ENCODE measurements at regions of chr3 and their contacts with region 1.

Region 1: GRCh38 chr3:48556793-48557626 is at the start of gene PFKFB4:
- DNase-seq: peak; percentile 90 to 97 (median 96)
- ATAC-seq: peak; percentile 88
- H3K4me3 ChIP-seq: peak within 1 kb of the TSS; percentile 61
- H3K27ac ChIP-seq: peak within 1 kb of the TSS; percentile 74
- H3K4me1 ChIP-seq: peaks cover 49 to 66% of the 10 kb centered on the region in 2 experiments
- H3K27me3 ChIP-seq: no peaks in the 10 kb centered on the region
- CTCF ChIP-seq: no peak; a peak in 1 of 6 replicates
- EP300 ChIP-seq: no peak
- POLR2A ChIP-seq: peak; percentile 69
- RAD21 ChIP-seq: no peak
- polyA plus RNA-seq, gene PFKFB4: 0.92 to 1.6 TPM

Region 2: DNA sequence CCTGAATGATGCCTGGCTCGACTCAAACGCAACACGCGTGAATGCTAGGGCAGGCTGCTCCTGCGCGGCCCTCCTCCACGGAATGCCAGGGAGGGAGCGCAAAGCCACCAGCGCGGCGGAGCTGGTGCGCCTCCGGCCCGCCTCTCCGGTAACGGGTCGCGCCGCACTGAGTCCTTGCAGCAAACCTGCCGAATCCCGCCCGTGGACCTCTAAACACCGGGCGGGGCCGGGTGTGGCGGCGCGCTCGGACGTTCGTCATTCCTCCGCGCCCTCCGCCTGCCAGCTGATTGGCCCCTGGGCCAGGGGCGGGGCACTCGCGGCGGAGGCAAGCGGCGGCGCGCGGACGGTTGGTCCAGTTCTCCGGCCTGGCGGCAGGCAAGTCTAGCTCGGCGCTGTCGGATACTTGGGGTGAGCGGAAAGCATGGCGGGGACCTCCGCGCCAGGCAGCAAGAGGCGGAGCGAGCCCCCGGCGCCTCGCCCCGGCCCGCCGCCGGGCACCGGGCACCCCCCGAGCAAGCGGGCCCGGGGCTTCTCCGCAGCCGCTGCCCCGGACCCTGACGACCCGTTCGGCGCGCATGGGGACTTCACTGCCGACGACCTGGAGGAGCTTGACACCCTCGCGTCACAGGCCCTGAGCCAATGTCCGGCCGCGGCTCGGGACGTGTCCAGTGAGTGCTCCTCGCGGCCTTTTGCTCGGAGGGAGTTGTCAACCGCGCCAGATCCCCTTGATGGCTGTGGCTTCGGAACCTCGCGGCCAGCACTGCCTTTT is 110.4 kb before region 1 on chr3 and contains the start of gene ATRIP:
- CTCF ChIA-PET with region 1: interaction called, 8 read pairs
- POLR2A ChIA-PET with region 1: interaction called, 3 read pairs
- in situ Hi-C with region 1: no loop called
- intact Hi-C with region 1: loop called (anchors 1 kb)
- DNase-seq: peak; percentile 86 to 93 (median 90)
- ATAC-seq: peak; percentile 94
- H3K4me3 ChIP-seq: peak within 1 kb of the TSS; percentile 88
- H3K27ac ChIP-seq: peak within 1 kb of the TSS; percentile 88
- H3K4me1 ChIP-seq: peaks cover 4 to 18% of the 10 kb centered on the region in 2 experiments; a peak in 4 of 5 replicates
- H3K27me3 ChIP-seq: no peaks in the 10 kb centered on the region
- CTCF ChIP-seq: 0 out of 6 replicates have a peak, but pooled peaks of 1 of the 3 experiments have one; percentile 2
- EP300 ChIP-seq: no peak
- POLR2A ChIP-seq: peak; percentile 87
- RAD21 ChIP-seq: no peak
- polyA plus RNA-seq, gene ATRIP: 1.7 to 2.3 TPM

Region 3: DNA sequence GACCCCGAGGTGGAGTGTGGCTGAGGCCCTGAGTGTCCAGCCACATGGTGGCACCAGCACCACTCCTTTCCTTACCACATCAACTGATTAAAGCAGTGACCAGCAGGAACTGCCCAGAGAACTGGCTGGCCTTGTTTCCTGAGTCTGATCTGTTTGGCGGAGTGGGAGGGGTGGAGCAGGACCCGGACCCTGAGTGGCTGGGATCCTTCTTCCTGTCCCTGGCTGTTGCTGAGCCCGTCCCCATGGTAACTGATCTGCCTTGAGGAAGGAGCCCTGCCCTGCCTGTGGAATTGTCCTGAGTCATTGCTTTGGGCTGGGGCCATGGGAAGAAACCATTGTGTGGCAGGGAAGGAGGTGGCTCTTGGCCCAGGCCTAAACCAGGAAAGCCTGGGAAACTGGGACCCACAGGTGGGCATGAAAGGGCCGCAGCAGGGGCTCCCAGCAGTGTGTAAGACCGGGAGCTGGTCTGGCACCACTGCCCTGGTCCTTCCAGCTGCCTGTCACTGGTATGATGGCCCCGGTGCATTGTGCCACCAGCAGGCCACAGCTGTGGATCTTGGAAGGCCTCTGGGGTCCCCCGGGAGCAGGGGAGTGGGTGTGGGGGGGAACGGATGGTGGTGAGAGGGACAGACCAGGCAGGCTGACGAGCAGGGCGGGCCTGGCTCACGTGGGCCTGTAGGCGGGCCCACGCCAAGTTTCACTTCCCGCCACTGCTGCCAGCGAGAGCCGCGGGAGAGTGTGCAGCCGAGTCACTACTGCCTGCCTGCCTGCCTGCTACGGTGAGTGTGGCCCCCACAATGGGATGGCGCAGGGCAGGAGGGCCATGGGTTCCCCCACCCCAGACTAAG is 91.3 kb before region 1 on chr3:
- CTCF ChIA-PET with region 1: no interaction called
- POLR2A ChIA-PET with region 1: no interaction called
- in situ Hi-C with region 1: loop called (anchors 5 kb)
- intact Hi-C with region 1: loop called (anchors 1 kb)
- DNase-seq: peak; percentile 69 to 88 (median 82)
- ATAC-seq: peak; percentile 94
- H3K4me3 ChIP-seq: no peak overlapping the region
- H3K27ac ChIP-seq: peak overlapping the region; percentile 88
- H3K4me1 ChIP-seq: peaks cover 6 to 48% of the 10 kb centered on the region in 2 experiments
- H3K27me3 ChIP-seq: no peaks in the 10 kb centered on the region
- CTCF ChIP-seq: peak; percentile 57 to 62 (median 60)
- EP300 ChIP-seq: no peak
- POLR2A ChIP-seq: 0 out of 2 replicates have a peak, but pooled peaks have one; percentile 27
- RAD21 ChIP-seq: peak; percentile 44 to 71; a peak in 3 of 4 replicates

Region 4: GRCh38 chr3:48635222-48636021 is 78.4 kb after region 1 on chr3 and contains the start of gene SLC26A6:
- CTCF ChIA-PET with region 1: no interaction called
- POLR2A ChIA-PET with region 1: no interaction called
- in situ Hi-C with region 1: no loop called
- intact Hi-C with region 1: loop called (anchors 5 kb)
- DNase-seq: peak; percentile 96 to 99 (median 96)
- ATAC-seq: peak; percentile 98
- H3K4me3 ChIP-seq: peak within 1 kb of the TSS; percentile 91
- H3K27ac ChIP-seq: peak within 1 kb of the TSS; percentile 65
- H3K4me1 ChIP-seq: peaks cover 6 to 44% of the 10 kb centered on the region in 2 experiments; a peak in 4 of 5 replicates
- H3K27me3 ChIP-seq: no peaks in the 10 kb centered on the region
- CTCF ChIP-seq: peak; percentile 65 to 78 (median 70)
- EP300 ChIP-seq: no peak
- POLR2A ChIP-seq: peak; percentile 73
- RAD21 ChIP-seq: peak in 1 of 2 experiments; percentile 59; a peak in 2 of 4 replicates
- polyA plus RNA-seq, gene SLC26A6: 2.1 to 4.5 TPM